Activated T-helper 1 cell treated with anti-CD3 and anti-CD28 coated beads, Interleukin-12 subunit alpha, Interleukin-12 subunit beta, Interleukin-2, Interleukin-4 antibody, amounts not matched to agents 30 ng/mL and 10 ng/mL and 1 ng/mL, durations not matched to agents 14 hours and 24 hours and 36 hours (primary cell): ENCODE measurements at regions of chr10 and their contacts with region 1.

Region 1: DNA sequence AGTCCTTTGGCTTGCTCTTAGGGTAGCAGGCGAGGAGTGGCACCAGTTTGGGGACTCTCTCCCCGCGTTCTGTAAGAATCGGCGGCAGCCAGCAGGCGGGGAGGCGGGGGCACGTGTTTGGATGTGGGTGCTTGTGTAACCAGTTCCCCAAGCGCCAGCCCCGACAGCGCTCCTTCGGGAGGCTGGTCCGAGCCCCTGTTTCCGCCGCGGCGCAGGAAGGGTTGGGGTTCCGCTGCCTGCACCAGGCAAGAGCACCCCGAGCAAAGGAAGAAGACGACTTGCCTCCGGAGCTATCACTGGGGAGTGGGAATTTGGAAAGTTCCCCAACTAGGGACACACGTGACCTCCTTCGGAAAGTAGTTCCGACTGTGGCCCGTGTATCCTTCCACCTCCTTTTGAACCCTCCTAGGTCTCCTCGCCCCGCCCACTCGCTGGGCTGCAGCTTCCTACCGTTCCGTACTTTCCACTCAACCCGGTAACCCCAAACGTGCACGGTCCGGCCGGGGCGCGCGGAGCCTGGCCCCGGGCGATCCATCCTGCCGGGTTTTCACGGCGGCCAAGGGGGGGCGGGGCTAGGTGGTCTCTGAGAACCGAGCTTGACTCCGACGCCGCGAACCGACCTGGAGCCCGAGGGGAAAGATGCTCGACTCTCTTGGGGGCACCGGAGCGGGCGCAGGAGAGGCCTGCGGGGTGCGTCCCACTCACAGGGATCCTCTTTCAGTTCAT is 1.2 kb downstream of the KLLN start:
- DNase-seq: peak; percentile 91
- H3K4me3 Mint-ChIP-seq: peak overlapping the region; percentile 94
- H3K27ac Mint-ChIP-seq: peak overlapping the region; percentile 92
- H3K4me1 Mint-ChIP-seq: peaks cover 52% of the 10 kb centered on the region
- H3K27me3 Mint-ChIP-seq: peaks cover 5% of the 10 kb centered on the region

Region 2: DNA sequence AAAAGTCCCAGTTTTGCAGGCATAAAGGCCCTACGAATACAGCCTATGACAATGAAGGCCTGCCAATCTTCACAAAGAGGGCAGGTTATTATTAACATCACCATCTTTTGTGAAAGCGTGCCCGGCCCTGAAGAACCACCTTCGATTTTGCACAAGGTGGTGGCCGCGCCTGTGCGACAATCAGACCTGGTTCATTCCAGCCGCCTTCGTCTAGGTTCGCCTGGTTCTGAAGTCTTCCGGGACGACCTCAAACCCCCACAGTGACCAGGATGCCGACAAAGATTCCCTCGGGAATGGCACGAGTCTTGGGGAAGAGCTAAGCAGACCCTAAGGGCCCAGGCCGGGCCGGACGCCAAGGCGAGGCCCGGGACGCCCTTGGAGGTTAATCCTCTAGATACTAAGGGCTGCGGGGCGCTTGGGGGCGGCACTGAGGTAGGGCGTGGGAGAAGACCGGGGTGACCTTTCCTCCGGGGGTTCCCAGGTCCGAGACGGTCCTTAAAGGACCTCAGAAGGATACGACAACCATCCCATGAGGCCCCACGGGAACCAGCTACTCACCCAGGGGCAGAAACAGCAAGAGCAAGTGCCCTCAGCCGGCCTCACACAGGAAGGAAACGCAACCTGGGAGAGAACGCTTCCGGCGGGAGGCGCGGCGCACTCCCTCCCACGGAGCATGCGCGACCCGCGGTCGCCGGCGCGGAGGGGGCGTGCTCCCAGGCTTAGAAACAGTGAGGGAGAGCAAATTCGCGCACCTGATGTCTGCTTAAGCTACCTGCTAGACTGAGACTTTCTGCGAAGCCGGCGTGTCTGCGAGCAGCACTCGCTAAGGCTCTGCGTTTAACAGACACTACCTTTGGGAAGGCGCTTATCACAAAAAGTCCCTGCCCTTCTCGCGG is 44.3 kb before region 1 on chr10 and contains the start of gene ATAD1:
- intact Hi-C with region 1: loop called (anchors 1 kb)
- DNase-seq: peak; percentile 88
- H3K4me3 Mint-ChIP-seq: peak within 1 kb of the TSS; percentile 93
- H3K27ac Mint-ChIP-seq: peak within 1 kb of the TSS; percentile 98
- H3K4me1 Mint-ChIP-seq: peaks cover 40% of the 10 kb centered on the region
- H3K27me3 Mint-ChIP-seq: peaks cover 4% of the 10 kb centered on the region
- total RNA-seq, gene ATAD1: 50.1 and 53.0 TPM in 2 replicates

Region 3: GRCh38 chr10:87837445-87837844 is 24.7 kb before region 1 on chr10:
- intact Hi-C with region 1: no loop called
- DNase-seq: no peak
- H3K4me3 Mint-ChIP-seq: no peak overlapping the region
- H3K27ac Mint-ChIP-seq: no peak overlapping the region
- H3K4me1 Mint-ChIP-seq: peaks cover 5% of the 10 kb centered on the region
- H3K27me3 Mint-ChIP-seq: peaks cover 9% of the 10 kb centered on the region

Region 4: GRCh38 chr10:88059190-88059589 is 197.1 kb after region 1 on chr10:
- intact Hi-C with region 1: no loop called
- DNase-seq: no peak
- H3K4me3 Mint-ChIP-seq: no peak overlapping the region
- H3K27ac Mint-ChIP-seq: no peak overlapping the region
- H3K4me1 Mint-ChIP-seq: peaks cover 21% of the 10 kb centered on the region
- H3K27me3 Mint-ChIP-seq: no peaks in the 10 kb centered on the region

Region 5: DNA sequence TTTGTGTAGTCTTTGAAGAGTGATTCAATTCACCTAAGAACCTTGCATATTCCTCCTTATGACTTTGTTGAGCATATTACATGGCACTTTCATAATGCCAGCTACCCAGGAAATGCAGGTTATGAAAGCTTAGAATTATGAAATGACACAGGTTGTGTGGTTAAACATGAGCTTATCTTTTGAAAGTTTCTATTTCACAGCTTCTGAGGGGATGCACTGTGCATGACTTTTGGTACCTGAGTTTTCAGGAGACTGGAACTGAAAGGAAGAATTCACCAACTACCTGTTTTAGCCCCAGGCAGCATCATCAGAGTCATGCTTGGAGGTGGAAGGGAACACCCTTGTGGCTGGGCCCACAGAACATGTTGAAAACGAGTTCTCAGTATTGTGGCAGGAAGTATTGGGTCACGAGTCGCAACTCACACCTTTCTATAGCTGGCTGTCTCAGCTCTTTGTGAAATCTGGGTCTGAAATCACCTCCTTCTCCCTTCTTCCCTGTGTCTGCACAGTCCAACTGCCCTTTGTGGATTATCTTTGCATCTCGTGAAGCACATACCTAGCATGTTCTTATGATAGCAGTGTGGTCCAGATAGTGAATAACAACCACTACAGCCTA is 229.5 kb after region 1 on chr10:
- intact Hi-C with region 1: loop called (anchors 1 kb)
- DNase-seq: peak; percentile 76
- H3K4me3 Mint-ChIP-seq: peak overlapping the region; percentile 13
- H3K27ac Mint-ChIP-seq: peak overlapping the region; percentile 68
- H3K4me1 Mint-ChIP-seq: peaks cover 35% of the 10 kb centered on the region
- H3K27me3 Mint-ChIP-seq: peaks cover 29% of the 10 kb centered on the region

Region 6: GRCh38 chr10:88194041-88194887 is 332.1 kb after region 1 on chr10:
- intact Hi-C with region 1: loop called (anchors 1 kb)
- DNase-seq: peak; percentile 47
- H3K4me3 Mint-ChIP-seq: peak overlapping the region; percentile 43
- H3K27ac Mint-ChIP-seq: peak overlapping the region; percentile 90
- H3K4me1 Mint-ChIP-seq: peaks cover 35% of the 10 kb centered on the region
- H3K27me3 Mint-ChIP-seq: peaks cover 3% of the 10 kb centered on the region

Region 7: DNA sequence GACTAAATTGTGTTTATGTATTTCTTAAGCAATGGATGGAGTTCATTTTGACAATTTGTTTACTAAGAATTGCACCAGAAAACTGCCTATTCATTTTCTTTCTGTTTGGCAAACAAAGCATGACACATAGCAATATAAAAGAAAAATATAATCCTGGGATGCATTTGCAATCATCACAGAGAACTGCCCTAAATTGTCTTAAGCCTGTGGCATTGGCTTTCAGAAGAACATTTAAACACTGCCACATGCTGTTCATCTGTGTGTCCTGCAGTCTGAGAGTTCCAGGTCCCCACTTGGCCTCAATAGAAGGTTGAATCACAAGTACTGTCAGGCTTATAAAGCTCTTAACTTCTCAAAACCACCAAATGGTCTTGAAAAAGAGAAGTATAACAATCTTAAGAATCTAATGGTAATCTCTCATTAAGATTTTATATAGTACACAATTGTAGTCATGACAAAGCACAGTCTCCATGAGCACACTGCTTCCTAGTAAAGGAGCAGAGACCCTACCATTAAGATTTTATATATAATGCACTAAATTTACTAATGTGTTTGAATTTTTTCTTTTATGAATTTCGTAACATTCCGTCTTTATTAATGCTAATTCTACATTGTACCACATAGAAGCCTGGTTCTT is 691.1 kb after region 1 on chr10:
- intact Hi-C with region 1: loop called (anchors 1 kb)
- DNase-seq: peak; percentile 14
- H3K4me3 Mint-ChIP-seq: no peak overlapping the region
- H3K27ac Mint-ChIP-seq: no peak overlapping the region
- H3K4me1 Mint-ChIP-seq: peaks cover 6% of the 10 kb centered on the region
- H3K27me3 Mint-ChIP-seq: peaks cover 3% of the 10 kb centered on the region

Region 8: GRCh38 chr10:89086801-89087521 is 1224.8 kb after region 1 on chr10:
- intact Hi-C with region 1: loop called (anchors 10 kb)
- DNase-seq: no peak
- H3K4me3 Mint-ChIP-seq: no peak overlapping the region
- H3K27ac Mint-ChIP-seq: no peak overlapping the region
- H3K4me1 Mint-ChIP-seq: peaks cover 9% of the 10 kb centered on the region
- H3K27me3 Mint-ChIP-seq: peaks cover 15% of the 10 kb centered on the region